HepG2 (cell line): ENCODE measurements at regions of chr11 and their contacts with region 1.

Region 1: GRCh38 chr11:45846974-45847910 is at the start of gene CRY2:
- DNase-seq: peak; percentile 93
- ATAC-seq: peak; percentile 86
- H3K4me3 ChIP-seq: peak within 1 kb of the TSS; percentile 77 to 97 (median 96)
- H3K27ac ChIP-seq: peak within 1 kb of the TSS; percentile 84
- H3K4me1 ChIP-seq: peaks cover 78% of the 10 kb centered on the region
- H3K27me3 ChIP-seq: no peaks in the 10 kb centered on the region; a peak in 1 of 5 replicates
- CTCF ChIP-seq: no peak
- EP300 ChIP-seq: no peak
- POLR2A ChIP-seq: peak; percentile 93 to 97
- RAD21 ChIP-seq: no peak
- total RNA-seq, gene CRY2: 8.8 and 12.2 TPM in 2 replicates

Region 2: DNA sequence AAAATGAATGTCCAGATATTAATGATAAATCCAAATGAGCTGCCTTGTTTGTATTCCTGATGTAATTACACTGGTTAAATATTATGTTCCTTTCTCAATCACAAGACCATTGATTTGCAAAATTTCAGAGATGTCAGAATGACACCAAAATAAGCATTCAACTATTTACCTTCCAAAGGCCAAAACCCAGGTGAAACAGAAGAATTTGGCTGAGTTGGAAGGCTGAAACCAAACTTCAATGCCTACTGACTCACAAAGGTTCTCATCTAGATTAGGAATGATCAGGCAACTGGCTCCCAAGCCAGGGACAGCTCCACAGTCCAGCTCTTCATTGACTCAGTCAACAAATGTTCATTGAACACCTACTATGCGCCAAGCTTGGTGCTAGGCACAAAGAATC is 55.8 kb before region 1 on chr11:
- CTCF ChIA-PET with region 1: no interaction called
- POLR2A ChIA-PET with region 1: no interaction called
- in situ Hi-C with region 1: no loop called
- intact Hi-C with region 1: no loop called
- DNase-seq: peak; percentile 22
- ATAC-seq: no peak
- H3K4me3 ChIP-seq: no peak overlapping the region
- H3K27ac ChIP-seq: no peak overlapping the region
- H3K4me1 ChIP-seq: peaks cover 19% of the 10 kb centered on the region
- H3K27me3 ChIP-seq: peaks cover 0 to 8% of the 10 kb centered on the region in 2 experiments; a peak in 2 of 5 replicates
- CTCF ChIP-seq: no peak
- EP300 ChIP-seq: no peak
- POLR2A ChIP-seq: no peak
- RAD21 ChIP-seq: no peak

Region 3: DNA sequence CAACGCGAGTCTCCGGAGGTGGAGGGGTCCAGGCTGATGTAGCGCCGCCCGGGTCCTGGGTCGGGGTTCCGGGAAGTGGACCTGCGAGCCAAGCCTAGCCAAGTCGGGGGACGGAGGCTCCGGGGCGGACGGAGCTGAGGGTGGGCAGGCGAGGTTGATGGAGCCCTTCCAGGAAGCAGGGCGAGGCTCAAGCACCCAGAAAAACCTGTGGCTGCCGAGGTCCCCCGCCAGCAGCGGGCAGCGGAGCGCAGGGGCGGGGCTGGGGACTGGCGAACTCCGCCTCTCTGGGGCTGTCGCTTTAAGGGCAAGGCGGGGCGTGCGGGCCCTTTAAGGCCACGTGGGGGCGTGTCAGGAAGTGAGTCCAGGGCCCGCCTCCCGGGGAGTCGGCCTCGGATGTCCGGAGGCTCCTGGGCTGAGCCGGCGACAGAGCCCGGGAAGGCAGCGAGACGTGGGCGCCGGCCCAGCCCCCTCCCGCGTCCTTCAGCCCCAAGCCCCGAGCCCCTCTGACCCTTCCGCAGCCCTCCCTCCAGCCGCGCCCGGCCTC is 42.4 kb before region 1 on chr11 and contains the start of gene SLC35C1:
- CTCF ChIA-PET with region 1: no interaction called
- POLR2A ChIA-PET with region 1: interaction called, 14 read pairs
- in situ Hi-C with region 1: no loop called
- intact Hi-C with region 1: loop called (anchors 2 kb)
- DNase-seq: peak; percentile 88
- ATAC-seq: peak; percentile 92
- H3K4me3 ChIP-seq: peak within 1 kb of the TSS; percentile 81 to 89 (median 82)
- H3K27ac ChIP-seq: peak within 1 kb of the TSS; percentile 79
- H3K4me1 ChIP-seq: peaks cover 37% of the 10 kb centered on the region
- H3K27me3 ChIP-seq: peaks cover 0 to 16% of the 10 kb centered on the region in 2 experiments; a peak in 1 of 5 replicates
- CTCF ChIP-seq: peak; percentile 39
- EP300 ChIP-seq: no peak
- POLR2A ChIP-seq: peak; percentile 62 to 84; a peak in 3 of 4 replicates
- RAD21 ChIP-seq: 0 out of 2 replicates have a peak, but pooled peaks have one; percentile 12
- total RNA-seq, gene SLC35C1: 6.1 and 7.0 TPM in 2 replicates

Region 4: GRCh38 chr11:45917623-45918330 is 70.5 kb after region 1 on chr11 and contains the start of gene PEX16:
- CTCF ChIA-PET with region 1: no interaction called
- POLR2A ChIA-PET with region 1: interaction called, 19 read pairs
- in situ Hi-C with region 1: no loop called
- intact Hi-C with region 1: loop called (anchors 5 kb)
- DNase-seq: peak; percentile 95
- ATAC-seq: peak; percentile 75
- H3K4me3 ChIP-seq: peak within 1 kb of the TSS; percentile 82 to 94 (median 90)
- H3K27ac ChIP-seq: peak within 1 kb of the TSS; percentile 88
- H3K4me1 ChIP-seq: peaks cover 41% of the 10 kb centered on the region
- H3K27me3 ChIP-seq: peaks cover 0 to 1% of the 10 kb centered on the region in 2 experiments; a peak in 1 of 5 replicates
- CTCF ChIP-seq: no peak
- EP300 ChIP-seq: peak in 1 of 2 experiments; percentile 20; a peak in 2 of 4 replicates
- POLR2A ChIP-seq: peak; percentile 77 to 81
- RAD21 ChIP-seq: peak; percentile 44
- total RNA-seq, gene PEX16: 18.6 and 21.8 TPM in 2 replicates

Region 5: GRCh38 chr11:46006418-46007070 is 159.3 kb after region 1 on chr11:
- CTCF ChIA-PET with region 1: no interaction called
- POLR2A ChIA-PET with region 1: no interaction called
- in situ Hi-C with region 1: no loop called
- intact Hi-C with region 1: loop called (anchors 10 kb)
- DNase-seq: peak; percentile 71
- ATAC-seq: peak; percentile 84
- H3K4me3 ChIP-seq: no peak overlapping the region
- H3K27ac ChIP-seq: no peak overlapping the region
- H3K4me1 ChIP-seq: no peaks in the 10 kb centered on the region
- H3K27me3 ChIP-seq: no peaks in the 10 kb centered on the region
- CTCF ChIP-seq: peak; percentile 81
- EP300 ChIP-seq: no peak; a peak in 1 of 4 replicates
- POLR2A ChIP-seq: no peak
- RAD21 ChIP-seq: peak; percentile 24; the same call in 1 of the 2 replicates

Region 6: DNA sequence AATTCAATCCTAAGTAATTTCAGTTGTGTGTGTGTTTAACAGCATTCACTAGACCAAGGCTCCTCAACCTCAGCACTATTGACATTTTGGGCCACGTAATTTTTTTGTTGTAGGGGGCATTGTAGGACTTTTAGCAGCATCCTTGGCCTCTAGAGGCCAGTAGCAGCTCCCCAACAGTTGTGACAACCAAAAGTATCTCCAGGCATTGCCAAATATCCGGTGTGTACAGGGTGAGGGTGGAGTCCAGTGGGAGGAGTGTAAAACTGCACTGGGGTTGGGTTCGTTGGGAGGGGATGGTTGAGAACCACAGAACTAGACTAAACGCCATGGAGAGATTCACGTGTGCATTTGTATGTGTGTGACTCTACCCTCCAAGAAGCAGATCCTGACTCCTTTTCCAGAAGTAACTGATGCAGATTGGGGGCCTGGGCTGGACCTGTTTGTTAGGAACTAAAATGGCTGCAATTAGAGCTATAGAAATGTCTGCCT is 280.0 kb after region 1 on chr11:
- CTCF ChIA-PET with region 1: no interaction called
- POLR2A ChIA-PET with region 1: no interaction called
- in situ Hi-C with region 1: no loop called
- intact Hi-C with region 1: loop called (anchors 5 kb)
- DNase-seq: peak; percentile 85
- ATAC-seq: peak; percentile 98
- H3K4me3 ChIP-seq: peak overlapping the region in 1 of 3 experiments; percentile 33; a peak in 1 of 6 replicates
- H3K27ac ChIP-seq: no peak overlapping the region
- H3K4me1 ChIP-seq: peaks cover 23% of the 10 kb centered on the region
- H3K27me3 ChIP-seq: peaks cover 0 to 2% of the 10 kb centered on the region in 2 experiments; a peak in 1 of 5 replicates
- CTCF ChIP-seq: peak; percentile 69
- EP300 ChIP-seq: 0 out of 4 replicates have a peak, but pooled peaks of 1 of the 2 experiments have one; percentile 33
- POLR2A ChIP-seq: no peak
- RAD21 ChIP-seq: no peak